Naive thymus-derived CD4-positive, alpha-beta T cell (primary cell): ENCODE measurements at regions of chr19 and their contacts with region 1.

Region 1: GRCh38 chr19:47745010-47745901 is at the start of gene NOP53:
- DNase-seq: peak; percentile 95 to 99 (median 97)
- ATAC-seq: peak; percentile 86
- H3K4me3 ChIP-seq: peak within 1 kb of the TSS; percentile 62
- H3K4me3 Mint-ChIP-seq: peak within 1 kb of the TSS; percentile 93 to 100 (median 99)
- H3K27ac ChIP-seq: peak within 1 kb of the TSS; percentile 100
- H3K27ac Mint-ChIP-seq: peak within 1 kb of the TSS; percentile 97 to 100 (median 100)
- H3K4me1 ChIP-seq: peaks cover 11 to 50% of the 10 kb centered on the region in 2 donors
- H3K4me1 Mint-ChIP-seq: peaks cover 18 to 58% (median 40%) of the 10 kb centered on the region in 7 donors
- H3K27me3 ChIP-seq: no peaks in the 10 kb centered on the region
- H3K27me3 Mint-ChIP-seq: peaks cover 0 to 3% (median 0%) of the 10 kb centered on the region in 5 donors
- total RNA-seq, gene NOP53: 316 to 1,143 (median 992) TPM

Region 2: GRCh38 chr19:46529622-46530462 is 1215.4 kb before region 1 on chr19:
- CTCF ChIA-PET with region 1: no interaction called
- POLR2A ChIA-PET with region 1: no interaction called
- intact Hi-C with region 1: no loop called
- DNase-seq: peak; percentile 57 to 83 (median 73)
- ATAC-seq: peak; percentile 95
- H3K4me3 ChIP-seq: no peak overlapping the region
- H3K4me3 Mint-ChIP-seq: peak overlapping the region in 4 of 10 donors; percentile 1 to 65 (median 32)
- H3K27ac ChIP-seq: no peak overlapping the region
- H3K27ac Mint-ChIP-seq: peak overlapping the region in 7 of 9 donors; percentile 17 to 89 (median 68)
- H3K4me1 ChIP-seq: peaks cover 8 to 19% of the 10 kb centered on the region in 2 donors
- H3K4me1 Mint-ChIP-seq: peaks cover 15 to 35% (median 23%) of the 10 kb centered on the region in 7 donors
- H3K27me3 ChIP-seq: no peaks in the 10 kb centered on the region
- H3K27me3 Mint-ChIP-seq: no peaks in the 10 kb centered on the region

Region 3: GRCh38 chr19:47296036-47296435 is 449.2 kb before region 1 on chr19:
- CTCF ChIA-PET with region 1: interaction called, 3 read pairs
- POLR2A ChIA-PET with region 1: no interaction called
- intact Hi-C with region 1: loop called in 1 of 2 experiments (anchors 1 kb)
- DNase-seq: peak; percentile 38 to 83 (median 73)
- ATAC-seq: peak; percentile 92
- H3K4me3 ChIP-seq: no peak overlapping the region
- H3K4me3 Mint-ChIP-seq: no peak overlapping the region
- H3K27ac ChIP-seq: no peak overlapping the region
- H3K27ac Mint-ChIP-seq: peak overlapping the region in 1 of 9 donors; percentile 8
- H3K4me1 ChIP-seq: no peaks in the 10 kb centered on the region
- H3K4me1 Mint-ChIP-seq: peaks cover 10 to 14% (median 11%) of the 10 kb centered on the region in 7 donors
- H3K27me3 ChIP-seq: no peaks in the 10 kb centered on the region
- H3K27me3 Mint-ChIP-seq: peaks cover 0 to under 1% (median 0%) of the 10 kb centered on the region in 5 donors

Region 4: DNA sequence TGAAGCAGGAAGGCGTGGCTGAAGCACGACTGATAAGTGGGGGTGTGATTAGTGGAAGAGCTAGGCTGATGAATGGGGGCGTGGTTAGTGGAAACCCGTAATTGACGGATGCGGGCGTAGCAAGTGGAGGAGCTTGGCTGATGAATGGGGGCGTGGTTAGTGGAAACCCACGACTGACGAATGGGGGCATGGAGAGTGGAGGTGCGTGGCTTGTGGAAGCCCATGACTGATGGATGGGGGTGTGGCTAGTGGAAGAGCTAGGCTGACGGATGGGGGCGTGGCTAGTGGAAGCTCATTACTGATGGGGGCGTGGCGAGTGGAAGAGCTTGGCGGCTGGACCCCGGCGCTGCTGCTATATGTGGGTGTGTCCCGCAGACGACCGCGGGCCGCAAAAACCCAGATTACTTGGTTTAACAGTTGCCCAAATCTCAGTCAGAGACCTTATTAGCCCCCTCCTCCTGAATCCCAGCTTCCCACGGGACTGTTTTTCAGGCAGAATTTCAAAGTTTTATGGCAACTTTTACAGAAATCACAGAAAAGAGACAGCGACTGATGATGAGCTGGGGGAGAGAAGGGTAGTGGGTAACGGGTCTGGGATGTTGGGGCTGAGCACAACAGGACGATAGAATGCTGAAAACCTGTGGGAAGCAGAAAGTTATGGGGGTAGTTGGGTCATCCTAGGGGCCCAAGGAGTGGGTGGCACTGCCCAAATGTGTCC is 316.9 kb before region 1 on chr19:
- CTCF ChIA-PET with region 1: interaction called, 3 read pairs
- POLR2A ChIA-PET with region 1: interaction called, 4 read pairs
- intact Hi-C with region 1: loop called in 1 of 2 experiments (anchors 1 kb)
- DNase-seq: peak; percentile 50 to 91 (median 71)
- ATAC-seq: peak; percentile 91
- H3K4me3 ChIP-seq: peak overlapping the region; percentile 50
- H3K4me3 Mint-ChIP-seq: no peak overlapping the region
- H3K27ac ChIP-seq: no peak overlapping the region
- H3K27ac Mint-ChIP-seq: no peak overlapping the region
- H3K4me1 ChIP-seq: peaks cover 10 to 34% of the 10 kb centered on the region in 2 donors
- H3K4me1 Mint-ChIP-seq: peaks cover under 1 to 23% (median 10%) of the 10 kb centered on the region in 7 donors
- H3K27me3 ChIP-seq: peaks cover 10 to 12% of the 10 kb centered on the region in 2 donors
- H3K27me3 Mint-ChIP-seq: peaks cover 39 to 47% (median 44%) of the 10 kb centered on the region in 5 donors

Region 5: GRCh38 chr19:47483800-47484690 is 261.2 kb before region 1 on chr19 and contains the start of gene KPTN:
- CTCF ChIA-PET with region 1: no interaction called
- POLR2A ChIA-PET with region 1: interaction called, 4 read pairs
- intact Hi-C with region 1: loop called in 1 of 2 experiments (anchors 1 kb)
- DNase-seq: peak; percentile 85 to 92 (median 88)
- ATAC-seq: peak; percentile 91
- H3K4me3 ChIP-seq: peak within 1 kb of the TSS; percentile 74
- H3K4me3 Mint-ChIP-seq: peak within 1 kb of the TSS; percentile 83 to 99 (median 96)
- H3K27ac ChIP-seq: peak within 1 kb of the TSS; percentile 96
- H3K27ac Mint-ChIP-seq: peak within 1 kb of the TSS; percentile 94 to 99 (median 97)
- H3K4me1 ChIP-seq: peaks cover 18% of the 10 kb centered on the region in 2 donors
- H3K4me1 Mint-ChIP-seq: peaks cover 22 to 39% (median 30%) of the 10 kb centered on the region in 7 donors
- H3K27me3 ChIP-seq: no peaks in the 10 kb centered on the region
- H3K27me3 Mint-ChIP-seq: peaks cover 0 to 4% (median 0%) of the 10 kb centered on the region in 5 donors
- total RNA-seq, gene KPTN: 5.1 to 9.2 (median 6.7) TPM

Region 6: DNA sequence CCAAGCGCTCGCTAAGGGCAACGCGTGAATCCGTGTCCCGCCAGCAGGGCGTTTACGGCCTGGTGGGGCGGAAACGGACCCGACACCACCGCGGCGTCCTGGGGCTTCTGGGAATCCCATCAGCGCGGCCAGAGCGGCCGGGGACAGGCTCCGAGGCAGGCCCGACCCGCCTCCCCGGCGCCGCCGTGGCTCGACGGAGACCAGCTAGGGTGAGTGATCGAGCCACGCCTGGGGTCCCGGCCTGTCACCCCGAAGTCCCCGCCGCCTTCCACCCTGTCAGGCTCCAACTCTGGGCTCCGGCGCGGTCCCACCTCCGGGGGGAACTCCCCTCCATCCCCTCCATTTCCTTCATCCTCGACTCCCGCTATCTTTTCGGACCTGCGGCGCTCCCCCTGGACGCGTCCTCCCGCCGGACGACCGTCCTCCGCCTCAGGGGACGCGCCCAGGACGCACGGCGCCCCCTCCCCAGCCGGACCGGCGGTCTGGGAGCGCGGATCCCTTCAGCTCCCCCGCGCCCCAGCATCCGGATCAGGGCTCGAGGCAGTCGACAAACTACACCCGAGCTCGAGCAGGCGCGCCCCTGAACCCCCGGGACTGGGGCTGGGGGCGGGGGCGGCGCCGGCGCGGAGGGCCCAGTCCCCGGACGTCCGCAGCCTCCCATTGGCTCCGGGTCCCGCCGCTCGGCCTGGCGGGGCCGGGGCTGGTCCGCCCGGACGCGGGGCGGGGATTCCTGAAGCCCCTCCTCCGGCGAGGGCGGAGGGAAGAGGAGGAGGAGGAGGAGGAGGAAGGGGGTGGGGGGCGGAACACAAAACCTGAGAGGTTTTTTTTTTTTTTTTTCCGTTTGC is 137.0 kb before region 1 on chr19:
- CTCF ChIA-PET with region 1: no interaction called
- POLR2A ChIA-PET with region 1: no interaction called
- intact Hi-C with region 1: loop called in 1 of 2 experiments (anchors 1 kb)
- DNase-seq: peak; percentile 91 to 99 (median 96)
- ATAC-seq: peak; percentile 96
- H3K4me3 ChIP-seq: peak overlapping the region; percentile 79
- H3K4me3 Mint-ChIP-seq: peak overlapping the region; percentile 70 to 95 (median 86)
- H3K27ac ChIP-seq: peak overlapping the region; percentile 96
- H3K27ac Mint-ChIP-seq: peak overlapping the region; percentile 61 to 92 (median 88)
- H3K4me1 ChIP-seq: peaks cover 16 to 22% of the 10 kb centered on the region in 2 donors
- H3K4me1 Mint-ChIP-seq: peaks cover 12 to 36% (median 28%) of the 10 kb centered on the region in 7 donors
- H3K27me3 ChIP-seq: no peaks in the 10 kb centered on the region
- H3K27me3 Mint-ChIP-seq: peaks cover 0 to 2% (median 0%) of the 10 kb centered on the region in 5 donors

Region 7: GRCh38 chr19:47713046-47714021 is 31.9 kb before region 1 on chr19 and contains the start of gene EHD2:
- CTCF ChIA-PET with region 1: interaction called, 23 read pairs
- POLR2A ChIA-PET with region 1: interaction called, 4 read pairs
- intact Hi-C with region 1: loop called (anchors 1 kb)
- DNase-seq: peak in 6 of 9 donors; percentile 12 to 70 (median 41)
- ATAC-seq: peak; percentile 73
- H3K4me3 ChIP-seq: no peak within 1 kb of the TSS
- H3K4me3 Mint-ChIP-seq: peak within 1 kb of the TSS in 3 of 10 donors; percentile 16 to 57 (median 46)
- H3K27ac ChIP-seq: no peak within 1 kb of the TSS
- H3K27ac Mint-ChIP-seq: peak within 1 kb of the TSS in 1 of 9 donors; percentile 43
- H3K4me1 ChIP-seq: no peaks in the 10 kb centered on the region
- H3K4me1 Mint-ChIP-seq: peaks cover 0 to 11% (median 4%) of the 10 kb centered on the region in 7 donors
- H3K27me3 ChIP-seq: peaks cover 0 to 4% of the 10 kb centered on the region in 2 donors
- H3K27me3 Mint-ChIP-seq: peaks cover 32 to 60% (median 44%) of the 10 kb centered on the region in 5 donors
- total RNA-seq, gene EHD2: 0.15 to 0.37 (median 0.19) TPM in 3 of 5 experiments, not detected in the others

Region 8: GRCh38 chr19:47790398-47790814 is 45.1 kb after region 1 on chr19:
- CTCF ChIA-PET with region 1: no interaction called
- POLR2A ChIA-PET with region 1: interaction called, 3 read pairs
- intact Hi-C with region 1: loop called in 1 of 2 experiments (anchors 1 kb)
- DNase-seq: peak; percentile 51 to 85 (median 74)
- ATAC-seq: peak; percentile 85
- H3K4me3 ChIP-seq: no peak overlapping the region
- H3K4me3 Mint-ChIP-seq: no peak overlapping the region
- H3K27ac ChIP-seq: no peak overlapping the region
- H3K27ac Mint-ChIP-seq: peak overlapping the region in 1 of 9 donors; percentile 32
- H3K4me1 ChIP-seq: no peaks in the 10 kb centered on the region
- H3K4me1 Mint-ChIP-seq: peaks cover 1 to 5% (median 4%) of the 10 kb centered on the region in 7 donors
- H3K27me3 ChIP-seq: no peaks in the 10 kb centered on the region
- H3K27me3 Mint-ChIP-seq: peaks cover 0 to under 1% (median 0%) of the 10 kb centered on the region in 5 donors